B cell (primary cell): ENCODE measurements at regions of chr12 and their contacts with region 1.

Region 1: DNA sequence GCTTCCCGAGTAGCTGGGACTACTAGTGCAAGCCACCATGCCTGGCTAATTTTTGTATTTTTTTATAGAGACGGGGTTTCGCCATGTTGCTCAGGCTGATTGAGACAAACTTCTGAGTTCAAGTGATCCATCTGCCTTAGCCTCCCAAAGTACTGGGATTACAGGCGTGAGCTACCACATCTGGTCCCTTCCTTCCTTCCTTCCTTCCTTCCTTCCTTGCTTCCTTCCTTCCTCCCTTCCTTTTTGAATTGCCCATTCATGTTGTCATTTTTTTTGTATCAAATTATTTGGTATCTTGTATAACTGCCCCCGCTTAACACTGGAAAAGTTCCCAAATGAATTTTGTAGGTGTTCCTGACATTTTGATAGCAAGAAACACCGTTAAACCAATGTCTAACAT is 11.7 kb downstream of the RAD9B start:
- DNase-seq: no peak
- ATAC-seq: no peak
- H3K4me3 ChIP-seq: no peak overlapping the region
- H3K4me3 Mint-ChIP-seq: no peak overlapping the region
- H3K27ac ChIP-seq: no peak overlapping the region
- H3K27ac Mint-ChIP-seq: no peak overlapping the region
- H3K4me1 ChIP-seq: no peaks in the 10 kb centered on the region
- H3K4me1 Mint-ChIP-seq: no peaks in the 10 kb centered on the region
- H3K27me3 ChIP-seq: no peaks in the 10 kb centered on the region
- H3K27me3 Mint-ChIP-seq: no peaks in the 10 kb centered on the region
- CTCF ChIP-seq: no peak

Region 2: DNA sequence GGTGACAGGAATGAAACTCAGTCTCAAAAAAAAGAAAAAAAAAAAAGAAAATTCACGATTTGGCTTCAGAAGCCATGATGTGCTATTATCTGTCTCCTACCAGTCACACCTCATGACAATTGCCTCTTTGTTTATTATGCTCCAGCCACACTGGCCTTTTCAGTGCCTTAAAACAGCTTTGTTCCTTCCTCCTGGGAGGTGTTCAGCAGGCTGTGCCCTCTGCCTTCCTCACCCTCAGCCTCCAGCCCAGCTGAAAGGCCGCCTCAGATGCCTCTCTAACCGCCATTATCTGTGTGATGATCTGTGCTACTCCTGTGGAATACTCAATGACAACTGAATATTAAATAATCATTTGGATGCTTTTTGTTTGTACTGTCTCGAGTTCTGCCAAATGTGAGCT is 55.1 kb before region 1 on chr12:
- CTCF ChIA-PET with region 1: no interaction called
- POLR2A ChIA-PET with region 1: no interaction called
- intact Hi-C with region 1: loop called (anchors 2 kb)
- DNase-seq: no peak
- ATAC-seq: no peak
- H3K4me3 ChIP-seq: no peak overlapping the region
- H3K4me3 Mint-ChIP-seq: no peak overlapping the region
- H3K27ac ChIP-seq: no peak overlapping the region
- H3K27ac Mint-ChIP-seq: peak overlapping the region; percentile 59
- H3K4me1 ChIP-seq: peaks cover 31% of the 10 kb centered on the region in 2 donors
- H3K4me1 Mint-ChIP-seq: peaks cover 26% of the 10 kb centered on the region
- H3K27me3 ChIP-seq: no peaks in the 10 kb centered on the region
- H3K27me3 Mint-ChIP-seq: no peaks in the 10 kb centered on the region
- CTCF ChIP-seq: no peak